ENCODE measurements at regions of chr3 and their contacts with region 1.

Region 1: GRCh38 chr3:98593046-98593936 is at the start of gene CPOX:
- DNase-seq: peak; percentile 86
- H3K4me3 Mint-ChIP-seq: peak within 1 kb of the TSS; percentile 84
- H3K27ac Mint-ChIP-seq: peak within 1 kb of the TSS; percentile 33
- H3K4me1 Mint-ChIP-seq: peaks cover 18% of the 10 kb centered on the region
- H3K27me3 Mint-ChIP-seq: no peaks in the 10 kb centered on the region
- CTCF ChIP-seq: no peak
- total RNA-seq, gene CPOX: 10.8 and 11.2 TPM in 2 replicates

Region 2: DNA sequence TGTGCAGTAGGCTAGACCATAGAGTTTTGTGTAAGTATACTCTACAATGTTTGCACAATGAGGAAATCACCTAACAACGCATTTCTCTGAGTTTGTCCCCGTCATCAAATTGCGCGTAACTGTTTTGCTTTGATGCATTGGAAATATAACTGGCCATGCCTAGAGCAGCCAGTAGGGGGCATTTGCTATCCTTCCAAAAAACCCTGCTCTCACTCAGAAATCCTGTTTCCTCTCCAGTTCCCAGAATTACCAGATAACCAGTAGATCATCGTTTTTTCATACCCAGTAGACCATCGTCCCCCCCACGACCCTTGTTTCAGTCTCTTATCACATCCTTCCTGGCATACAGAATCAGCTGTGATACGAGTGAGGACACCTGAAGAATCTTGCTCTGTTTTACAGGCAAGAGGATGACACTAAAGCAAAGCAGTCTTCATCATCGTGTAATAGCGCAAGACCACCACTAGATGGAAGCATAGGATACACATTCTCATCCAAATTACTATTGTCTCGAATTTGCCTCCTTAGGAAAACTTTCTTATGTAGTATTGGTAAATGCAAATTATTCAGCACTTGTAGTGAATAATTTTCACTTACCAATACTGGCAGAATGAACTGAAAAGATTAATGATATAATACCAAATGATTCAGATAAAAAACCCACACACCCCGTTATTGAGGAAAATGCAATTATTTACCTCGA is 553.8 kb before region 1 on chr3:
- CTCF ChIA-PET with region 1: interaction called, 16 read pairs
- POLR2A ChIA-PET with region 1: interaction called, 5 read pairs
- intact Hi-C with region 1: loop called (anchors 1 kb)
- DNase-seq: peak; percentile 86
- H3K4me3 Mint-ChIP-seq: peak overlapping the region; percentile 59
- H3K27ac Mint-ChIP-seq: no peak overlapping the region
- H3K4me1 Mint-ChIP-seq: no peaks in the 10 kb centered on the region
- H3K27me3 Mint-ChIP-seq: peaks cover 70% of the 10 kb centered on the region
- CTCF ChIP-seq: peak; percentile 79

Region 3: GRCh38 chr3:98612587-98612986 is 19.3 kb after region 1 on chr3:
- CTCF ChIA-PET with region 1: interaction called, 15 read pairs
- POLR2A ChIA-PET with region 1: interaction called, 4 read pairs
- intact Hi-C with region 1: no loop called
- DNase-seq: peak; percentile 74
- H3K4me3 Mint-ChIP-seq: no peak overlapping the region
- H3K27ac Mint-ChIP-seq: no peak overlapping the region
- H3K4me1 Mint-ChIP-seq: peaks cover 6% of the 10 kb centered on the region
- H3K27me3 Mint-ChIP-seq: no peaks in the 10 kb centered on the region
- CTCF ChIP-seq: no peak

Region 4: GRCh38 chr3:98791341-98792325 is 198.3 kb after region 1 on chr3:
- CTCF ChIA-PET with region 1: interaction called, 15 read pairs
- POLR2A ChIA-PET with region 1: interaction called, 4 read pairs
- intact Hi-C with region 1: no loop called
- DNase-seq: peak; percentile 42
- H3K4me3 Mint-ChIP-seq: no peak overlapping the region
- H3K27ac Mint-ChIP-seq: peak overlapping the region; percentile 77
- H3K4me1 Mint-ChIP-seq: peaks cover 17% of the 10 kb centered on the region
- H3K27me3 Mint-ChIP-seq: no peaks in the 10 kb centered on the region
- CTCF ChIP-seq: no peak

Region 5: DNA sequence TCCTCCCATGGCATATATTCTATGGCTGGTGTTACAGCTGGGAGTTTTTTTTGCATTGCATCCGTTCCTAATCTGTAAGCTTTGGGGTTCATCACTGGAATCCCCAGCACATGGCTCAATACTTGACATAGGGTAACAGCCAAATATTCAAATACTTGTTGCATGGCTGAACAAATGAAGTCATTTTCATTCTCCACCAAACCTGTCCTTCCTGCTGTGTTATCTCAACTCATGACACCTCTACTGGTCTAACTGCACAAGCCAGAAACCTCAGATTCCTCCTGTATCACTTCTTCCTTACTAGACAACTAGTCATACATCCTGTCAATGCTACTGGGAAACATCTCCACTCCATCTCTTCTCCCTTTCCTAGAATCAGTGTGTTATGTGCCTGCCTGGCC is 213.2 kb after region 1 on chr3:
- CTCF ChIA-PET with region 1: interaction called, 407 read pairs
- POLR2A ChIA-PET with region 1: interaction called, 4 read pairs
- intact Hi-C with region 1: no loop called
- DNase-seq: no peak
- H3K4me3 Mint-ChIP-seq: no peak overlapping the region
- H3K27ac Mint-ChIP-seq: peak overlapping the region; percentile 43
- H3K4me1 Mint-ChIP-seq: no peaks in the 10 kb centered on the region
- H3K27me3 Mint-ChIP-seq: no peaks in the 10 kb centered on the region
- CTCF ChIP-seq: no peak

Region 6: DNA sequence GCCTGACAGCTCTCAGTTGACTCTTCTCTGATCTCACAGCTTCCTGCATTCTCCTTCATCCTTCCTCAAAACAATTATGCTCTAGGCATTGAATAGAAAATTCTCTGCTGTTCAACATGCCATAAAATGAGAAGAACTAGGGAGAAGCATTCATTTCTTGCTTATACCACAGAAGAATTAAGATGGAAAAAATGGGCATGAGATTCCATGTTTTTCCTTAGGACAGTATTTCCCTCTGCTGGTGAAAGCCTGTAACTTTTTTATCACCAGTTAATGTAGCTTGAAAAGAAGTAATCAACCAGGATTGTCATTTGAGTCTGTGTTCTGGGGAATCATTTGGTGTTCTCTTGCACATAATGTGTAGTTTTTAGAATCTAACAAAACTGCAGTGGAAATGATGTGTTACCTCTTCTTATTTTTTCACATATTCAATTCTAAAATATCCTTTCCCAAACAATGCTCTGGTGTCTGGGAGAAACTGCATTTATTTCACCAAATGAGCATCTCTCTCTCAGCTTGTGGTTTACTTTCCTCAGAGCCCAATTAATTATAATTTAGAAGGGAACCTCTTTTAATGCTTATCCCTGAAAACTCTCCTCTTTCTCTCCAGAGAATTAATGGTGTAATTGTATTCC is 401.0 kb after region 1 on chr3:
- CTCF ChIA-PET with region 1: interaction called, 34 read pairs
- POLR2A ChIA-PET with region 1: no interaction called
- intact Hi-C with region 1: loop called (anchors 1 kb)
- DNase-seq: peak; percentile 55
- H3K4me3 Mint-ChIP-seq: no peak overlapping the region
- H3K27ac Mint-ChIP-seq: no peak overlapping the region
- H3K4me1 Mint-ChIP-seq: no peaks in the 10 kb centered on the region
- H3K27me3 Mint-ChIP-seq: no peaks in the 10 kb centered on the region
- CTCF ChIP-seq: peak; percentile 53

Region 7: GRCh38 chr3:99418209-99418635 is 824.9 kb after region 1 on chr3:
- CTCF ChIA-PET with region 1: no interaction called
- POLR2A ChIA-PET with region 1: no interaction called
- intact Hi-C with region 1: no loop called
- DNase-seq: no peak
- H3K4me3 Mint-ChIP-seq: no peak overlapping the region
- H3K27ac Mint-ChIP-seq: no peak overlapping the region
- H3K4me1 Mint-ChIP-seq: no peaks in the 10 kb centered on the region
- H3K27me3 Mint-ChIP-seq: no peaks in the 10 kb centered on the region
- CTCF ChIP-seq: no peak

Measured in MCF 10A (cell line).